ENCODE measurements at regions of chr17 and their contacts with region 1.

Region 1: GRCh38 chr17:81094509-81095382 is 59.8 kb downstream of the BAIAP2 start:
- DNase-seq: peak; percentile 99
- ATAC-seq: peak; percentile 72
- H3K4me3 ChIP-seq: peak overlapping the region; percentile 20; the same call in 1 of the 2 replicates
- H3K27ac ChIP-seq: peak overlapping the region; percentile 98
- H3K4me1 ChIP-seq: peaks cover 53% of the 10 kb centered on the region
- H3K27me3 ChIP-seq: no peaks in the 10 kb centered on the region
- CTCF ChIP-seq: no peak; the same call in 1 of the 2 replicates

Region 2: DNA sequence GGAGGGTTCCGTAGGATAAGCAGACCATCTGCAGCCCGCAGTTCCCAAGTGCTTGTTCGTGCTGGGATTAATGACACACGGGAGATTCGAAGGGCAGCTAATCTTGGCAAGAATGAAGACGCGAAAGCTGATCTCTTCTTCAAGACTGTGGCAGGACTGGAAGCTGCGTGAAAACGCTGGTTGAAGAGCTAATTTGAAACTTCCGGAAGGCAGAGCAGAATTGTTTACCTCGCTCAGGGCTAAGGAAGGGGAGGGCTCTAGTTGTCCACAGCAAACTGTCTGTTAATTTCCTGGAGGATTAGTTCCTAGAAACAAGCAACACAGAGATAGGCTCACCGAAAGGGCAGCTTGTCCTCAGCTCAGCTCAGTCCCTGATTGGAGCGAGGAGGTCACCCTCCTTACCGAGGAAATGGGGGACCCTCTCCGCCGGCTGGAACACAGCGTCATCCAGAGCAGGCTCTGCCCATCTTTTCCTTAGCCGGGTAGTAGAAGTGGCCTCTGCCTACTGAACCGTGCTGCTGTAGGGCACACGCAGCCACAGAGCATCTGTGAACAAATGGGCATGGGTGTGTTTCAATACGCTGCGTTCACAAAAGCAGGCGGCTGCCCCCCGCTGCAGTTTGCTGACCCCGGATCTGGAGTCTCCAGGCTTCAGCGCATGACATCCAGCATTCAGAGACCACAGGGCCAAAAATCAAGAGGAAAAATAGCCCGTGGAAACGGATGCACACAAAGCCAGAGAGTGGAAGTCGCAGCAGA is 76.5 kb before region 1 on chr17:
- CTCF ChIA-PET with region 1: interaction called, 21 read pairs
- POLR2A ChIA-PET with region 1: interaction called, 11 read pairs
- intact Hi-C with region 1: no loop called
- DNase-seq: peak; percentile 41
- ATAC-seq: peak; percentile 80
- H3K4me3 ChIP-seq: peak overlapping the region; percentile 4; the same call in 1 of the 2 replicates
- H3K27ac ChIP-seq: no peak overlapping the region
- H3K4me1 ChIP-seq: peaks cover 3% of the 10 kb centered on the region; the same call in 1 of the 2 replicates
- H3K27me3 ChIP-seq: no peaks in the 10 kb centered on the region
- CTCF ChIP-seq: no peak

Region 3: GRCh38 chr17:81034779-81035388 is 59.9 kb before region 1 on chr17 and contains the start of gene BAIAP2:
- CTCF ChIA-PET with region 1: interaction called, 8 read pairs
- POLR2A ChIA-PET with region 1: interaction called, 3 read pairs
- intact Hi-C with region 1: loop called (anchors 1 kb)
- DNase-seq: peak; percentile 91
- ATAC-seq: peak; percentile 65
- H3K4me3 ChIP-seq: peak within 1 kb of the TSS; percentile 92
- H3K27ac ChIP-seq: peak within 1 kb of the TSS; percentile 77; the same call in 1 of the 2 replicates
- H3K4me1 ChIP-seq: peaks cover 36% of the 10 kb centered on the region
- H3K27me3 ChIP-seq: no peaks in the 10 kb centered on the region
- CTCF ChIP-seq: no peak
- total RNA-seq, gene BAIAP2: 50.9 and 56.9 TPM in 2 replicates

Region 4: GRCh38 chr17:81049973-81050551 is 44.7 kb before region 1 on chr17:
- CTCF ChIA-PET with region 1: no interaction called
- POLR2A ChIA-PET with region 1: no interaction called
- intact Hi-C with region 1: loop called (anchors 1 kb)
- DNase-seq: peak; percentile 93
- ATAC-seq: peak; percentile 94
- H3K4me3 ChIP-seq: peak overlapping the region; percentile 52
- H3K27ac ChIP-seq: peak overlapping the region; percentile 90
- H3K4me1 ChIP-seq: peaks cover 41% of the 10 kb centered on the region
- H3K27me3 ChIP-seq: no peaks in the 10 kb centered on the region
- CTCF ChIP-seq: no peak

Measured in PC-3 (cell line).